Naive thymus-derived CD4-positive, alpha-beta T cell (primary cell): ENCODE measurements at regions of chr19 and their contacts with region 1.

Region 1: DNA sequence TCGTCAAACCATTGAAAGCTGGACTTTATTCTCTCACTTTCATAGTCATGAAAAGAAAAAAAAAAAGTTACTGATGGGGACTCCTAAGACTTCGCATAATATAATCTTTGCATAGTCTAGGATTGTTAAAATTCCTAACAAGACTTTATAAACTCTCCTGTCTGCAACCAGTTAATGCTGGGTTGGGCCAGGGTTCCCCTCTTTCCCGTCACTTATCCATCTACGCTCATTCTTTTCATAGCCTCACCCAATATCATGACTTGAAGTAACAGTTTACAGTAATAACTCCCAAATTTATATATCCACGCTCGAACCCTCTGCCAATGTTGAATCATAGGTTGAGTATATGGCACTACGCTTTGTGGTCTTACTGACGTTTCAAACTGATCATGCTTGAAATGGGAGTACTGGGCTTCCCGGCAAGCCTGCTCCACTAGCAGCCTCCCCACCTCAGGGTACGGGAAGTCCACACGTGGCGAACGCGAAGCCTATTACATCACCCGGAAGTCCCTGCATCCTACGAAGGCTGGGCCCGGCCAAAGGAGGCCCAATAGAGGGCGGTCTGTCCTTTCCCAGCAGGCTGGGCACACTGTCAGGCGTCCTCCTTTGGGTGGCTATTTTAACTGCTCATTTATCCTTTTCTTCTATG is 743 bp upstream of the ZNF460 start:
- DNase-seq: peak in 6 of 9 donors; percentile 60 to 81 (median 78)
- ATAC-seq: peak; percentile 85
- H3K4me3 ChIP-seq: peak overlapping the region; percentile 80
- H3K4me3 Mint-ChIP-seq: no peak overlapping the region
- H3K27ac ChIP-seq: peak overlapping the region; percentile 98
- H3K27ac Mint-ChIP-seq: peak overlapping the region in 2 of 9 donors; percentile 6 to 51
- H3K4me1 ChIP-seq: peaks cover 18 to 23% of the 10 kb centered on the region in 2 donors
- H3K4me1 Mint-ChIP-seq: peaks cover 7 to 33% (median 25%) of the 10 kb centered on the region in 7 donors
- H3K27me3 ChIP-seq: no peaks in the 10 kb centered on the region
- H3K27me3 Mint-ChIP-seq: no peaks in the 10 kb centered on the region

Region 2: GRCh38 chr19:57191141-57192076 is 88.1 kb before region 1 on chr19 and contains the start of gene ZNF264:
- CTCF ChIA-PET with region 1: no interaction called
- POLR2A ChIA-PET with region 1: interaction called, 3 read pairs
- intact Hi-C with region 1: loop called (anchors 1 kb)
- DNase-seq: peak; percentile 79 to 90 (median 86)
- ATAC-seq: peak; percentile 98
- H3K4me3 ChIP-seq: peak within 1 kb of the TSS; percentile 95
- H3K4me3 Mint-ChIP-seq: peak within 1 kb of the TSS; percentile 90 to 97 (median 94)
- H3K27ac ChIP-seq: peak within 1 kb of the TSS; percentile 85
- H3K27ac Mint-ChIP-seq: peak within 1 kb of the TSS; percentile 92 to 97 (median 95)
- H3K4me1 ChIP-seq: peaks cover 11 to 22% of the 10 kb centered on the region in 2 donors
- H3K4me1 Mint-ChIP-seq: peaks cover 20 to 40% (median 35%) of the 10 kb centered on the region in 7 donors
- H3K27me3 ChIP-seq: no peaks in the 10 kb centered on the region
- H3K27me3 Mint-ChIP-seq: peaks cover 0 to 11% (median 6%) of the 10 kb centered on the region in 5 donors
- total RNA-seq, gene ZNF264: 31.5 to 65.9 (median 44.3) TPM

Region 3: GRCh38 chr19:57290970-57291369 is 11.4 kb after region 1 on chr19:
- CTCF ChIA-PET with region 1: no interaction called
- POLR2A ChIA-PET with region 1: no interaction called
- intact Hi-C with region 1: no loop called
- DNase-seq: no peak
- ATAC-seq: no peak
- H3K4me3 ChIP-seq: peak overlapping the region; percentile 0
- H3K4me3 Mint-ChIP-seq: no peak overlapping the region
- H3K27ac ChIP-seq: no peak overlapping the region
- H3K27ac Mint-ChIP-seq: no peak overlapping the region
- H3K4me1 ChIP-seq: no peaks in the 10 kb centered on the region
- H3K4me1 Mint-ChIP-seq: peaks cover 3 to 13% (median 8%) of the 10 kb centered on the region in 7 donors
- H3K27me3 ChIP-seq: no peaks in the 10 kb centered on the region
- H3K27me3 Mint-ChIP-seq: no peaks in the 10 kb centered on the region

Region 4: DNA sequence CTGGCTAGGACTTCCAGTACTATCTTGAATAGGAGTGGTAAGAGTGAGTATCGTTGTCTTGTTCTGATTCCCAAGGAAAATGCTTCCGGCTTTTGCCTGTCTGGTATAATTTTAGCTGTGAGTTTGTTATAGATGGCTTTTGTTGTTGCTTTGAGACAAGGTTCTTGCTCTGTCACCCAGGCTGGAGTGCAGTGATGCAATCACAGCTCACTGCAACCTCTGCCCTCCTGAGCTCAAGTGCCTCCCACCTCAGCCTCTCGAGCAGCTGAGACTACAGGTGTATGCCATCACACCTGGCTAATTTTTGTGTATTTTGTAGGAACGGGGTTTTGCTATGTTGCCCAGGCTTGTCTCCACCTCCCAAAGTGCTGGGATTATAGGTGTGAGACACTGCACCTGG is 34.6 kb after region 1 on chr19:
- CTCF ChIA-PET with region 1: no interaction called
- POLR2A ChIA-PET with region 1: no interaction called
- intact Hi-C with region 1: no loop called
- DNase-seq: no peak
- ATAC-seq: no peak
- H3K4me3 ChIP-seq: no peak overlapping the region
- H3K4me3 Mint-ChIP-seq: no peak overlapping the region
- H3K27ac ChIP-seq: no peak overlapping the region
- H3K27ac Mint-ChIP-seq: no peak overlapping the region
- H3K4me1 ChIP-seq: no peaks in the 10 kb centered on the region
- H3K4me1 Mint-ChIP-seq: peaks cover 0 to 3% (median 0%) of the 10 kb centered on the region in 7 donors
- H3K27me3 ChIP-seq: peaks cover 0 to 6% of the 10 kb centered on the region in 2 donors
- H3K27me3 Mint-ChIP-seq: peaks cover 25 to 42% (median 41%) of the 10 kb centered on the region in 5 donors

Region 5: GRCh38 chr19:57350877-57351805 is 71.6 kb after region 1 on chr19 and contains the start of gene ZNF304:
- CTCF ChIA-PET with region 1: no interaction called
- POLR2A ChIA-PET with region 1: no interaction called
- intact Hi-C with region 1: loop called (anchors 1 kb)
- DNase-seq: peak; percentile 51 to 85 (median 76)
- ATAC-seq: peak; percentile 100
- H3K4me3 ChIP-seq: peak within 1 kb of the TSS; percentile 83
- H3K4me3 Mint-ChIP-seq: peak within 1 kb of the TSS; percentile 93 to 97 (median 96)
- H3K27ac ChIP-seq: peak within 1 kb of the TSS; percentile 77
- H3K27ac Mint-ChIP-seq: peak within 1 kb of the TSS; percentile 80 to 96 (median 92)
- H3K4me1 ChIP-seq: peaks cover 11% of the 10 kb centered on the region in 2 donors
- H3K4me1 Mint-ChIP-seq: peaks cover 28 to 43% (median 32%) of the 10 kb centered on the region in 7 donors
- H3K27me3 ChIP-seq: no peaks in the 10 kb centered on the region
- H3K27me3 Mint-ChIP-seq: peaks cover 0 to 11% (median 7%) of the 10 kb centered on the region in 5 donors
- total RNA-seq, gene ZNF304: 6.0 to 12.5 (median 9.0) TPM

Region 6: DNA sequence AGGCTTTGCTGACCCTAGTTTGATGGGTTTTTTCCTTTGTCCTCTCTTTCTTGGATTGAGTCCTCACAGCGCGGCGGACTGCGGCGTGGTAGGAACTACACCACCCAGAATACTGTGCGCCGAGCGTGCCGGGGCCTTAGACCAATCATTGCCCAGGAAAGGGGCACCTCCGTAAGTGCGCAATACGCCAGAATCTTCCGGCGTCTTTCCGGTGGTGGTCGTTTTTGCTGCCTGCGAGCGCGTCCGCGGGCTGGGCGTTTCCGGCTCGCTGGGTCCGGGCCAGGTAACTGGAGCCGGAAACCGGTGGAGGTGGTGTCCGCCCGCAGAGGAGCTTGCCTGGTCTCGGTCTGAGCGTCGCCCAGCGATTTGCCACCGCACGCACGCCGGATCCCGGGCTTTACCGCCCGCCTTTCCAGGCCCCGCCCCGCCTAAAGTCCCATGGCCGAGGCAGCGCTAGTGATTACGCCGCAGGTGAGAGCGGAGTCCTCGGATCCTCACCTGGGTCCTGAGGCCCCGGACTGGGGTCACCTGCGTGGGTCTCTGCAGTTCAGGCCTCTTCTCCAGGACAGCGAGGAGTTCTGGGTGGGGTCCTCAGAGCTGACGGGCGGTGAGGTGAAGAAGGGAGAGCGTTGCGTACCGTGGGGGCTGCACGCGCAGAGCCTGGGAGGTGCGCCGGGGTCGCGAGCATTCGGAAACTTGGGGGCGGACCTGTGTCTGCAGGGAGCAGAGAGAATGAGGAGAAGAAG is 247.8 kb after region 1 on chr19 and contains the start of gene ZNF549:
- CTCF ChIA-PET with region 1: no interaction called
- POLR2A ChIA-PET with region 1: no interaction called
- intact Hi-C with region 1: loop called in 1 of 2 experiments (anchors 1 kb)
- DNase-seq: peak; percentile 65 to 90 (median 88)
- ATAC-seq: peak; percentile 99
- H3K4me3 ChIP-seq: peak within 1 kb of the TSS; percentile 98
- H3K4me3 Mint-ChIP-seq: peak within 1 kb of the TSS; percentile 89 to 98 (median 96)
- H3K27ac ChIP-seq: peak within 1 kb of the TSS; percentile 94
- H3K27ac Mint-ChIP-seq: peak within 1 kb of the TSS; percentile 80 to 98 (median 95)
- H3K4me1 ChIP-seq: peaks cover 14 to 18% of the 10 kb centered on the region in 2 donors
- H3K4me1 Mint-ChIP-seq: peaks cover 15 to 36% (median 32%) of the 10 kb centered on the region in 7 donors
- H3K27me3 ChIP-seq: no peaks in the 10 kb centered on the region
- H3K27me3 Mint-ChIP-seq: peaks cover 0 to 4% (median 0%) of the 10 kb centered on the region in 5 donors
- total RNA-seq, gene ZNF549: 6.9 to 24.8 (median 11.3) TPM

Region 7: GRCh38 chr19:58097781-58098681 is 818.5 kb after region 1 on chr19 and contains the start of gene ZSCAN18:
- CTCF ChIA-PET with region 1: no interaction called
- POLR2A ChIA-PET with region 1: no interaction called
- intact Hi-C with region 1: loop called in 1 of 2 experiments (anchors 1 kb)
- DNase-seq: peak; percentile 77 to 100 (median 99)
- ATAC-seq: peak; percentile 97
- H3K4me3 ChIP-seq: peak within 1 kb of the TSS; percentile 86
- H3K4me3 Mint-ChIP-seq: peak within 1 kb of the TSS; percentile 83 to 100 (median 91)
- H3K27ac ChIP-seq: peak within 1 kb of the TSS; percentile 100
- H3K27ac Mint-ChIP-seq: peak within 1 kb of the TSS; percentile 98 to 100 (median 100)
- H3K4me1 ChIP-seq: peaks cover 0 to 11% of the 10 kb centered on the region in 2 donors
- H3K4me1 Mint-ChIP-seq: peaks cover 8 to 18% (median 15%) of the 10 kb centered on the region in 7 donors
- H3K27me3 ChIP-seq: no peaks in the 10 kb centered on the region
- H3K27me3 Mint-ChIP-seq: no peaks in the 10 kb centered on the region
- total RNA-seq, gene ZSCAN18: 8.2 to 100 (median 78.1) TPM